Ovary (tissue), 10 donors: ENCODE measurements at regions of chr5 and their contacts with region 1.

Region 1: DNA sequence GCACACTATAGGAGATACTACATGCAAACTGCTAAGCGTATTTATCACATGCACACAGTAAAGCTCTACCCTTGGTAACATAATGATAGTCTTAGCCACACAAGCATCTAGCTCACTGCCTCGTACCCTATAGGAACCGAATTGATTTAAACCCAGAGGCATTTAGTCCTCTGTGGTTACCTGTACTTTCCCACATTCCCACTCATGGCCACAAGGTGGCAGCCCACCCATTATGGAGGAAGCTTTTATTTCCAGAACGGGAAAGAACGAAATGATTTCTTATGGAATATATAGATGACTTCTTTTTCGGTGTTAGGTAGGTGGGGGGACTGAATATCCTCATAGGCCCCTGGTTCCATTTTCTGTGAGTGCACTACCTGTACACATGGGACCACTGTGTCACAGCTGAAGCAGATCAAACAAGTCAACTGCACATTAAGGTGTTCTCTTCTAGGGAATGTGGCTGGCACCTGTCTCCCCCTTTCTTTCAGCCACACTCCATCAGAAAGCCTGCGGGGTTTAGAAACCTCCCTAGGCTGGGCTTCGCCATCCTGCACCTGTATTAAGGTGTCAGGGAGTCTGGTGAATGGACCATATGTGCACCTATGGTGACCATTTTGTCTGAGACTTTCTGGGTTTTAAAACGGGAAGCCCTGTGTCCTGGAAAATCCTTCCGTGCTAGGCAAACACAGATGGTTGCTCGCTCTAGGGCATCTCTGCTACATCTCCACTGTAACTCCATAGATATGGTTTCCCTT is 313.2 kb downstream of the SLIT3 start:
- DNase-seq: peak; percentile 50 to 83 (median 80)
- H3K4me3 ChIP-seq: no peak overlapping the region
- H3K27ac ChIP-seq: no peak overlapping the region
- H3K4me1 ChIP-seq: no peaks in the 10 kb centered on the region
- H3K27me3 ChIP-seq: no peaks in the 10 kb centered on the region
- CTCF ChIP-seq: peak; percentile 70 to 85 (median 75)
- EP300 ChIP-seq: no peak
- POLR2A ChIP-seq: no peak

Region 2: GRCh38 chr5:168424594-168425323 is 563.0 kb before region 1 on chr5:
- intact Hi-C with region 1: no loop called
- DNase-seq: no peak
- H3K4me3 ChIP-seq: no peak overlapping the region
- H3K27ac ChIP-seq: no peak overlapping the region
- H3K4me1 ChIP-seq: no peaks in the 10 kb centered on the region
- H3K27me3 ChIP-seq: no peaks in the 10 kb centered on the region
- CTCF ChIP-seq: no peak
- EP300 ChIP-seq: no peak
- POLR2A ChIP-seq: no peak

Region 3: GRCh38 chr5:169577951-169578350 is 590.2 kb after region 1 on chr5:
- intact Hi-C with region 1: loop called in 2 of 4 experiments (anchors 5 to 10 kb)
- DNase-seq: peak in 1 of 5 donors; percentile 21
- H3K4me3 ChIP-seq: no peak overlapping the region
- H3K27ac ChIP-seq: no peak overlapping the region
- H3K4me1 ChIP-seq: no peaks in the 10 kb centered on the region
- H3K27me3 ChIP-seq: no peaks in the 10 kb centered on the region
- CTCF ChIP-seq: peak in 2 of 3 donors; percentile 22 to 48
- EP300 ChIP-seq: no peak
- POLR2A ChIP-seq: no peak